Calu3 (cell line): ENCODE measurements at regions of chr4 and their contacts with region 1.

Region 1: GRCh38 chr4:116055857-116056827 is 942.7 kb upstream of the NDST4 start:
- DNase-seq: no peak
- H3K4me3 Mint-ChIP-seq: no peak overlapping the region
- H3K27ac Mint-ChIP-seq: no peak overlapping the region
- H3K4me1 Mint-ChIP-seq: no peaks in the 10 kb centered on the region
- H3K27me3 Mint-ChIP-seq: no peaks in the 10 kb centered on the region
- CTCF ChIP-seq: no peak

Region 2: GRCh38 chr4:116150152-116150551 is 94.0 kb after region 1 on chr4:
- CTCF ChIA-PET with region 1: no interaction called
- intact Hi-C with region 1: loop called (anchors 1 kb)
- DNase-seq: no peak
- H3K4me3 Mint-ChIP-seq: no peak overlapping the region
- H3K27ac Mint-ChIP-seq: no peak overlapping the region
- H3K4me1 Mint-ChIP-seq: no peaks in the 10 kb centered on the region
- H3K27me3 Mint-ChIP-seq: no peaks in the 10 kb centered on the region
- CTCF ChIP-seq: no peak

Region 3: GRCh38 chr4:116202524-116202923 is 146.4 kb after region 1 on chr4:
- CTCF ChIA-PET with region 1: no interaction called
- intact Hi-C with region 1: no loop called
- DNase-seq: no peak
- H3K4me3 Mint-ChIP-seq: no peak overlapping the region
- H3K27ac Mint-ChIP-seq: no peak overlapping the region
- H3K4me1 Mint-ChIP-seq: no peaks in the 10 kb centered on the region
- H3K27me3 Mint-ChIP-seq: no peaks in the 10 kb centered on the region
- CTCF ChIP-seq: no peak

Region 4: DNA sequence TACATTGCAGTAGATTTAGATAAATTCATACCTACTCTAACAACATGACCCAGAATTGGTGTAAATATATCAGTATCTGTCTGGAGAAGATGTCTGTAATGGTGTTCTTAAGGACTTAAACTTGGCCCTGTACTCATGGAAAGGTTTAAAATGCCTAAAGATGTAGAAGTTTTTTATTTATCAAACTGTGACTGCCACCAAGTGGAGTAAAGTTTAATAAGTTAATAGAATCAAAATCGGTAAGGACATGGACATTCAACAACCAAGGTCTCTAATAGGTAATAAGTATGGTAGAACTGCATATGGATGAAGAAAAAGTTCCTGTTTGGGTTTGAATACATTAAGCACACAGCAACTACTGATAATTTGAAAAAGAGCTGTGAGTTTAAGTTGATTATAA is 1504.2 kb after region 1 on chr4:
- CTCF ChIA-PET with region 1: no interaction called
- intact Hi-C with region 1: loop called (anchors 10 kb)
- DNase-seq: no peak
- H3K4me3 Mint-ChIP-seq: no peak overlapping the region
- H3K27ac Mint-ChIP-seq: no peak overlapping the region
- H3K4me1 Mint-ChIP-seq: no peaks in the 10 kb centered on the region
- H3K27me3 Mint-ChIP-seq: no peaks in the 10 kb centered on the region
- CTCF ChIP-seq: no peak